ENCODE measurements at regions of chr10 and their contacts with region 1.

Region 1: GRCh38 chr10:119608316-119609155 is 11.8 kb upstream of the TIAL1 start:
- DNase-seq: no peak
- H3K4me3 ChIP-seq: no peak overlapping the region
- H3K27ac ChIP-seq: no peak overlapping the region
- H3K27me3 ChIP-seq: no peaks in the 10 kb centered on the region
- CTCF ChIP-seq: peak; percentile 65

Region 2: DNA sequence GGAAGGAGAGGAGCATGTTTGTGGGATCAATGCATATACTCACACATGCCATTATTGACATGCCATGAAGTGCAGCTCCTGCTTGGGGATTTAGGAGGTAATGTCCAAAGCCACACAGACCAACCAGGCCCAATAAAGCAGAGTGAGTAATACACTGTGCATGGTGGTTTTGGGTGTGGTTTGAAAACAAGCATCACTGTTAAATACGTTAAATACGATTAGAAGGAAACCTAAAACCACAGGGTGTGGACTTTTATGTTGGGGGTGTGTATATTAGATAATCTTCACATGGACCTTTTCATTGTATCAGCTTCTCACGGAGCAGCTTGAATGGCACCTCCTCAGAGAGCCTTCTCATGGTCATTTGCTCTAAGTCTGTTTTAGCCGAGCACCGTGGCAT is 517.6 kb before region 1 on chr10:
- CTCF ChIA-PET with region 1: no interaction called
- POLR2A ChIA-PET with region 1: no interaction called
- DNase-seq: no peak
- H3K4me3 ChIP-seq: no peak overlapping the region
- H3K27ac ChIP-seq: no peak overlapping the region
- H3K27me3 ChIP-seq: no peaks in the 10 kb centered on the region
- CTCF ChIP-seq: no peak

Region 3: GRCh38 chr10:119189811-119190282 is 418.7 kb before region 1 on chr10:
- CTCF ChIA-PET with region 1: no interaction called
- POLR2A ChIA-PET with region 1: interaction called, 11 read pairs
- DNase-seq: no peak
- H3K4me3 ChIP-seq: no peak overlapping the region
- H3K27ac ChIP-seq: peak overlapping the region; percentile 93
- H3K27me3 ChIP-seq: no peaks in the 10 kb centered on the region
- CTCF ChIP-seq: no peak

Region 4: DNA sequence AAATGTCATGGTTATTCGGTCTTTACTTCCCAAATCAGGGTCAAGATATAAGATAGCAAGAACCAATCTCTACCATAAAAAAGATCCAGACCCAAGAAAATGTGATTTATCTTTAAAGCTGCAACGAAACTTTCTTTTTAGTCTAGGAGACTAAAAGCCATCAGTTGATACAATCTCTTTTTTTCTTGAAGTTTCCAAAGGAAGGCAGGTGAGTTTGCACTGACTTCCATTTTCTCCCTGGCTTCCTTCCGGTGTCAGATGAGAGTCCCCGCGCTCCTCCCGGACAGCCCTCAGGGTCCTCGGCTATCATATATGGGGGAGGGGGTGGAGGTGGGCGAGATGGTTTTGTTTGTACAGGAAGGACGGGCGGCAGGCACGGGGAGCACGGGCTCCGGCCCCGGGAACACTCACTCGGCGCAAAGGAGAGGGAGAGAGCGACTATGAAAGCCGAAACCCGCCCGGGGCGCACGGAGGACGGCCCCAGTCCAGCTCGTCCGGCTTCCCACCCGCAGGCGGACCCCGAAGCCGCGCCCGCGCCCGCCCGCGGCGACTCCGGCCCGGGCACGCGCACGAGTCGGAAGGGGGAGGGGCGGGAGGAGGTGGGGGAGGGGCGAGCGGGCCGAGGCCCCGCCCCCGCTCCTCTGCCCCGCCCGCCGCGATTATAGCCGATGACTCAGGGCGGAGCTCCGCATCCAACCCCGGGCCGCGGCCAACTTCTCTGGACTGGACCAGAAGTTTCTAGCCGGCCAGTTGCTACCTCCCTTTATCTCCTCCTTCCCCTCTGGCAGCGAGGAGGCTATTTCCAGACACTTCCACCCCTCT is 42.4 kb after region 1 on chr10 and contains the start of gene BAG3:
- CTCF ChIA-PET with region 1: interaction called, 10 read pairs
- POLR2A ChIA-PET with region 1: no interaction called
- DNase-seq: peak; percentile 86
- H3K4me3 ChIP-seq: peak within 1 kb of the TSS; percentile 92
- H3K27ac ChIP-seq: peak within 1 kb of the TSS; percentile 83
- H3K27me3 ChIP-seq: no peaks in the 10 kb centered on the region
- CTCF ChIP-seq: no peak
- polyA plus RNA-seq, gene BAG3: 12.7 and 20.1 TPM in 2 replicates

Region 5: DNA sequence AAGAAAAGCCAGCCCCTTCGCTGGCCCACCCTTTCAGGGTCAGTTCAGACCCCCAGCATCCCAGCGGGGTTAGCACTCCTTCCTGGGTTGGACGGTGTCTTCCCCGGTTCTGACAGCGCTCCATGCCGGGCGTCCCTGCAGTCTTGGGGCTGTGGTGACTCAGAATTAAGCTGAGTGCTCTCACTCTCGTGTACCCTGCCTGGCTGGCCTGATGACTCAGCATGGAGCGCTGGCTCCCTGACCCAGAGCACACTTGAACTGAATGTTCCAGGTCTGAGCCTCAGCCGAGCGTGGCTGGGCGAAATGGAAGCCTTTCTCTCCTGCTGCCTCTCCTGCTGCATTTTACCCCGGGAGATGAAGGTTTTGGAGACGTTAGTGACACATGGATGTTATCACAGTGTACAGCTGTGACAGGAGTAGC is 49.7 kb after region 1 on chr10:
- CTCF ChIA-PET with region 1: no interaction called
- POLR2A ChIA-PET with region 1: interaction called, 11 read pairs
- DNase-seq: peak; percentile 71
- H3K4me3 ChIP-seq: peak overlapping the region; percentile 38
- H3K27ac ChIP-seq: peak overlapping the region; percentile 65
- H3K27me3 ChIP-seq: no peaks in the 10 kb centered on the region
- CTCF ChIP-seq: no peak